PC-9 (cell line): ENCODE measurements at regions of chr20 and their contacts with region 1.

Region 1: GRCh38 chr20:62020935-62021701 is 44.6 kb downstream of the TAF4 start:
- DNase-seq: no peak
- H3K4me3 ChIP-seq: no peak overlapping the region
- H3K27ac ChIP-seq: no peak overlapping the region
- H3K4me1 ChIP-seq: no peaks in the 10 kb centered on the region
- H3K27me3 ChIP-seq: no peaks in the 10 kb centered on the region
- CTCF ChIP-seq: no peak

Region 2: GRCh38 chr20:61912665-61913422 is 108.3 kb before region 1 on chr20:
- CTCF ChIA-PET with region 1: no interaction called
- POLR2A ChIA-PET with region 1: no interaction called
- intact Hi-C with region 1: no loop called
- DNase-seq: no peak
- H3K4me3 ChIP-seq: no peak overlapping the region
- H3K27ac ChIP-seq: no peak overlapping the region
- H3K4me1 ChIP-seq: no peaks in the 10 kb centered on the region
- H3K27me3 ChIP-seq: peaks cover 100% of the 10 kb centered on the region
- CTCF ChIP-seq: no peak

Region 3: GRCh38 chr20:62208880-62209755 is 188.0 kb after region 1 on chr20:
- CTCF ChIA-PET with region 1: no interaction called
- POLR2A ChIA-PET with region 1: interaction called, 10 read pairs
- intact Hi-C with region 1: no loop called
- DNase-seq: peak; percentile 54 to 66
- H3K4me3 ChIP-seq: no peak overlapping the region
- H3K27ac ChIP-seq: no peak overlapping the region
- H3K4me1 ChIP-seq: no peaks in the 10 kb centered on the region
- H3K27me3 ChIP-seq: peaks cover 10% of the 10 kb centered on the region
- CTCF ChIP-seq: peak; percentile 52; the same call in 1 of the 2 replicates